ENCODE measurements at regions of chr12 and their contacts with region 1.

Region 1: DNA sequence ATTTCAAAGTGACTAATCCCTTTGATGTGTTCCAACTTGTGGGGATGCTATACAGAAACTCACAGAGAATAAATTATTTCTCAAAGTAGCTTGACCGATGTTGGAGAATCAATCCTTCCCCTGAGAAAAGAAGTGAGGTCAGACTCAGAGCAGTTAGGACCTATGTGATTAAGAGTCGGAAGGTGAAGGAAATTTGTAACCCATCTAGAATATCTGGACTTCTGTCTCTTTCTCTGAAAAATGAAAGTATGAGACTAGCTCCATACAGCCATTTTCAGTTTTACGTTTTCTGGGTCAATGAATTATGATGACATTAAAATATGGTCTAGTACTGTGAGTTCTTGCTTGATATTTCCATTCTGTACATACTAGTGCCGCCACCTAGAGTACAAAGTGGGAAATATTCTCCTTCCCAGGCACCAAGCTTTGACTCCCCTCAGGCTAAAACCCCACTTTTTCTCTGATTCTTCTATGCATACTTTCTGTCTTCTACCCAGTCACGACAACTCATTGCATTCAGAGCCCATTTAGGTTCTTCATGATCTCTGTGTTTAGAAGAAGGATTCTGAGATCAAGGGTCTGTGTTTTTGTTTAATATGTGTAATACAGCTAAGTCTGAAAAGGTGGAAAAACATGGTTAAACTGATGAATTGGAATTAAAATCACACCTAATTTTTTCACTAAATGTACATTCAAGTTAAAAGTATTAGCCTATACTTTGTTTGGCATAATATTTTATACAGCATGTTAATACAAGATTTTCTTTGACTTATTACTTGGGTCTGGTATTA is 6.9 kb upstream of the NTS start:
- DNase-seq: peak in 1 of 5 donors; percentile 25
- ATAC-seq: peak; percentile 70 to 85 (median 78)
- H3K4me3 ChIP-seq: peak overlapping the region in 6 of 12 donors; percentile 11 to 41 (median 20)
- H3K27ac ChIP-seq: no peak overlapping the region
- H3K4me1 ChIP-seq: peaks cover 0 to 7% (median 0%) of the 10 kb centered on the region in 12 donors
- H3K27me3 ChIP-seq: no peaks in the 10 kb centered on the region
- CTCF ChIP-seq: peak; percentile 69 to 88 (median 78)
- POLR2A ChIP-seq: no peak

Region 2: DNA sequence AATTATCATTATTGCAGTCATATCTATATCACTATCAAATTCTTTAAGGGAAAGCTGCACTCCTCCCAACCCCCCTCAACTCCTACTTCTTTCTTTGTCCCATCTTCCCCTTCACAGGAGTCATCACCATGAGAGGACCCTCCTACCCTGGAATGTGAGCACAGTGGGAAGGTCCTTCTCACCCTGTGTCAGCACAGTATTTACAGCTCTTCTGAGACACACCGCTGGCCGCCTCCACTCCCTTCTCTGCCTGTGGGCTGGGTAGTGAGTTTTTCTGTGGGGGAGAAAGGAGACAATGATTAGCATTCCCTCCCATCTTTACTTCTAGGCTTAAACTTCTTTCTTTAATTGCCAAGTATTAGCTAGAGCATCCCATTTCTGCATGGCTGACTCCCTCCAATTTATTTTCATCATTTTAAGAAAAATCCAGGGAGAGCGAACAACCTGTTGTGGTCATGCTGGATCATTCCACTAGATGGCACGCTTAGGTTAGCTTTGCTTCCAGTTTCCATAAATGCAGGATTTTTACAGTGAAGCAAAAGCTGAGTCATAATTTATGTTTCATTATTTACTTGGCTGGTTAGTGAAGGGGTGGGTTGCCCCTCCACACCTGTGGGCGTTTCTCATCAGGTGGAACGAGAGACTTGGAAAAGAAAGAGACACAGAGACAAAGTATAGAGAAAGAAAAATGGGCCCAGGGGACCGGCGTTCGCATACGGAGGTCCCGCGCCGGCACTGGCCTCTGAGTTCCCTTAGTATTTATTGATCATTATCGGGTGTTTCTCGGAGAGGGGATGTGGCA is 398.6 kb before region 1 on chr12:
- intact Hi-C with region 1: loop called in 9 of 10 experiments (anchors 2 to 5 kb)
- DNase-seq: peak in 1 of 5 donors; percentile 15
- ATAC-seq: peak in 3 of 4 donors; percentile 32 to 68 (median 61)
- H3K4me3 ChIP-seq: peak overlapping the region in 11 of 12 donors; percentile 17 to 58 (median 44)
- H3K27ac ChIP-seq: no peak overlapping the region
- H3K4me1 ChIP-seq: peaks cover 0 to 5% (median 0%) of the 10 kb centered on the region in 12 donors
- H3K27me3 ChIP-seq: peaks cover 0 to 26% (median 4%) of the 10 kb centered on the region in 9 donors
- CTCF ChIP-seq: peak; percentile 56 to 81 (median 74)
- POLR2A ChIP-seq: no peak

Region 3: DNA sequence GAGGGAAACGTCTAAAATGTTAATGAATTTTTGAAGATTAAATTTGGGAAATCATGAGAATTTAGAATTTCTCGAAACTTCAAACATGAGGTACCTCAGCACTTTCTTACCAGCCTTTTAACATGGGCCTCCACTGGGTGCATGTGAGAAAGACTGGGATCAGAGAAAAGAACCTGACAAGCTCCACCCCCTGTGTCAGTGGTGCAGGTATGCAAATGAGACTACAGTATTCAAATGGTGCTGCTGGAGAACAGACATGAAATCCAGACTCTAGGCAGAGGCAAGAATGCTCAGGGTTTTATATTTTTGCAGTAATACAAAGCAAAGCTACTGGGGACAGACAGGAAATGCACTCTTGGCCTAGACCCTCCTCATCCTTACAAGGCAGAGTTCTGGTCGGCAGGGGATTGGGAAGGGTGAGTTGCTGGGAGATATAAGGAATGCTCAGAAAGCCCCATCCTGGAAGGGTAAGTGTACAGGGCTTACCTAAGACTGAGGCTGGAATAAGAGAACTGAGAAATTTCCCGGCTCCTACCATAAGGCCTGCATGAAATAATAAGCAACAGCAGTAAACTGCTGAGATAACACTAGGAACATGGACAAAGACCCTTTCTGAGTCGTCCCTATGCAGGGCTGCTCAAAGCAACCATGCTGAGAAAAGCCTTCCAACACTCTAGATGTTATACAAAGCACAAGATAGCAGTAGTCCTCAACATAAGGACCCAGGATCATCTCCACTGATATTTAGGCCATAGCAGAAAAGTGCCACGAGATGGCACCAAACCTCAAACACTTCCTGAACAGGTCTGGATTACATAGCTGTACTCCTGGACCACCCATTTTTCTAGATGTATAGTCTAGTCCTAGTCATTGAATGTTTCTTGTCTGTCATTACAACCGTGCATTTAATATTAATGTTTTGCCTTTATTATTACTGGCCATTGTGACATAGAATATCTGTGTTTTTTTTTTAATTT is 291.8 kb before region 1 on chr12:
- intact Hi-C with region 1: loop called (anchors 1 to 2 kb)
- DNase-seq: peak; percentile 19 to 40 (median 29)
- ATAC-seq: peak in 3 of 4 donors; percentile 79 to 83 (median 81)
- H3K4me3 ChIP-seq: no peak overlapping the region
- H3K27ac ChIP-seq: no peak overlapping the region
- H3K4me1 ChIP-seq: no peaks in the 10 kb centered on the region
- H3K27me3 ChIP-seq: no peaks in the 10 kb centered on the region
- CTCF ChIP-seq: peak; percentile 46 to 81 (median 70)
- POLR2A ChIP-seq: no peak

Region 4: GRCh38 chr12:85725991-85726390 is 141.2 kb before region 1 on chr12:
- intact Hi-C with region 1: loop called in 4 of 10 experiments (anchors 5 to 10 kb)
- DNase-seq: no peak
- ATAC-seq: no peak
- H3K4me3 ChIP-seq: no peak overlapping the region
- H3K27ac ChIP-seq: no peak overlapping the region
- H3K4me1 ChIP-seq: no peaks in the 10 kb centered on the region
- H3K27me3 ChIP-seq: no peaks in the 10 kb centered on the region
- CTCF ChIP-seq: peak in 3 of 12 donors; percentile 7 to 13 (median 11)
- POLR2A ChIP-seq: no peak

Region 5: GRCh38 chr12:85814116-85814515 is 53.1 kb before region 1 on chr12:
- intact Hi-C with region 1: loop called in 1 of 10 experiments (anchors 5 kb)
- DNase-seq: no peak
- ATAC-seq: peak in 2 of 4 donors; percentile 41 to 58
- H3K4me3 ChIP-seq: no peak overlapping the region
- H3K27ac ChIP-seq: no peak overlapping the region
- H3K4me1 ChIP-seq: peaks cover 0 to 14% (median 2%) of the 10 kb centered on the region in 12 donors
- H3K27me3 ChIP-seq: no peaks in the 10 kb centered on the region
- CTCF ChIP-seq: peak in 1 of 12 donors; percentile 4
- POLR2A ChIP-seq: no peak

Region 6: GRCh38 chr12:85947286-85947685 is 80.1 kb after region 1 on chr12:
- intact Hi-C with region 1: no loop called
- DNase-seq: no peak
- ATAC-seq: no peak
- H3K4me3 ChIP-seq: no peak overlapping the region
- H3K27ac ChIP-seq: no peak overlapping the region
- H3K4me1 ChIP-seq: no peaks in the 10 kb centered on the region
- H3K27me3 ChIP-seq: no peaks in the 10 kb centered on the region
- CTCF ChIP-seq: no peak
- POLR2A ChIP-seq: no peak

Measured in heart left ventricle (tissue), 16 donors.